Panc1 (cell line): ENCODE measurements at regions of chr2 and their contacts with region 1.

Region 1: DNA sequence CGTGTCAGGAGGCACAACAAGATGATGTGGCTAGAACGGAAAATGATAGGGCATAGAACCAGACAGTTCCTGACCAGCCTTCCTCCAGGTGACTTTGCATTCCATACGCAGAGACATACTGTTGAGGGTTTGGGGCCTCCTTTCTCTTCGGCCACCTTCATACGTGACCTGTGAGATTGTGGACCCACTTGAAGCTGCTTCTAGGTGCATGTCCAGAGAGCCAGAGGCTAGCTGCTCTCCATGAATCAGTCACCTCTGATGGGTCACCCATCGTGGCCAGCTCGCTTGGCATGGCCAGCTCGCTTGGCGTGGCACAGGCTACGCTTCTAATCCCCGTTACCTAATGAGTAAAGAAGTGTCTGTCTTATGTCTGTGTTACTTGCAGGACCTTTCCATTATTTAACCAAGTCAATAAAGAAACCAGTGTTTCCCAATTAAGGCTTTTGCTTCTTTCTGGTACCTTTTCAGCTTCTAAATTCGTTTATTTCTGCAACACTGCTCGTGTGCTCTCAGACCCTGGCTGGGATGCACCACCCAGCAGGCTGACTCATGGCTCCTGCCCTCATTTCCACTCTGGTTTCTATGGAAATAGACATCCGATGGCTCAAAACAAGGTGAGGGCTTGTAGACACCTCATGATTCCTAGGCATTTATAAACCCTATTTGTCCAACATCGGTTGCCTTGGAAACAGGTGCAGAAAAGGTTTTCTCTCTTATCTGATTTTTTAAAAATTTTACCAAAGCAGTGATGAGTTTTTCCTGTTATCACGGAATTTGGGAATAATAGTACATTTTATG is 86.7 kb upstream of the B3GNT7 start:
- DNase-seq: no peak
- ATAC-seq: 0 out of 2 replicates have a peak, but pooled peaks have one; percentile 24
- H3K4me3 ChIP-seq: no peak overlapping the region
- H3K27ac ChIP-seq: no peak overlapping the region
- H3K4me1 ChIP-seq: peaks cover 4% of the 10 kb centered on the region
- H3K27me3 ChIP-seq: no peaks in the 10 kb centered on the region
- CTCF ChIP-seq: no peak

Region 2: DNA sequence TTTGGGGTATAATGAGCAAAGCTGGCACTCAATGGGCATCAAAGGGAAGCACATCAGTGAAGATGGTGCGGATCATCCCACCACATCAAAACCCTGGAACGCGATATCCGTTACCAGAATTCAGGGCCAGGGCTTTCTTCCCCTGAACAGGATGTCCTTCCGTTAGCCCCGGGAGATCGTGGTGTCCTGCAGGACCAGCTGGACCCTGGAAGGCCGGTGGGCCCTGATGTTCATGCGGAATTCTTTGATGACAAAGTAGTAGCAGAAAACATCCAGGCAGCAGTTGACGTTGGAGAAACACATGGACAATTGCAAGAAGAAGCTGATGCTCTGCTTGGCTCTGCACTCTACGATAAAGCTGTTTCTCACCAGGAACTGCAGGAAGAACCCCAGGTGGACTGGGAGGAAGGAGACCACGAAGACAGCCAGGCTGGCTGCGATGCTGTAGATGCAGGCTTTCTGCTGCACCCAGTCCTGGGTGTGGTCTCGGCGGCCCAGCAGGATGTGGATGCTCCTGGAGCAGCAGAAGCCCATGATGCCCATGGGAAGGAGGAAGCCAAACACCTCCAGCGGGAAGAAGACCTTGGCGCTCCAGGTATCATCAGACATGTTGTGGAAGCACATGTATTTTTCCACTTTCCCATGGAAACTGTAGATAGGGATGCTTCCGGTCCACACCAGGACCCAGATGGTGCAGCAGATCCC is 398.8 kb before region 1 on chr2:
- CTCF ChIA-PET with region 1: no interaction called
- POLR2A ChIA-PET with region 1: interaction called, 14 read pairs
- in situ Hi-C with region 1: no loop called
- intact Hi-C with region 1: no loop called
- DNase-seq: no peak
- ATAC-seq: no peak
- H3K4me3 ChIP-seq: no peak overlapping the region
- H3K27ac ChIP-seq: no peak overlapping the region
- H3K4me1 ChIP-seq: no peaks in the 10 kb centered on the region
- H3K27me3 ChIP-seq: no peaks in the 10 kb centered on the region
- CTCF ChIP-seq: no peak

Region 3: DNA sequence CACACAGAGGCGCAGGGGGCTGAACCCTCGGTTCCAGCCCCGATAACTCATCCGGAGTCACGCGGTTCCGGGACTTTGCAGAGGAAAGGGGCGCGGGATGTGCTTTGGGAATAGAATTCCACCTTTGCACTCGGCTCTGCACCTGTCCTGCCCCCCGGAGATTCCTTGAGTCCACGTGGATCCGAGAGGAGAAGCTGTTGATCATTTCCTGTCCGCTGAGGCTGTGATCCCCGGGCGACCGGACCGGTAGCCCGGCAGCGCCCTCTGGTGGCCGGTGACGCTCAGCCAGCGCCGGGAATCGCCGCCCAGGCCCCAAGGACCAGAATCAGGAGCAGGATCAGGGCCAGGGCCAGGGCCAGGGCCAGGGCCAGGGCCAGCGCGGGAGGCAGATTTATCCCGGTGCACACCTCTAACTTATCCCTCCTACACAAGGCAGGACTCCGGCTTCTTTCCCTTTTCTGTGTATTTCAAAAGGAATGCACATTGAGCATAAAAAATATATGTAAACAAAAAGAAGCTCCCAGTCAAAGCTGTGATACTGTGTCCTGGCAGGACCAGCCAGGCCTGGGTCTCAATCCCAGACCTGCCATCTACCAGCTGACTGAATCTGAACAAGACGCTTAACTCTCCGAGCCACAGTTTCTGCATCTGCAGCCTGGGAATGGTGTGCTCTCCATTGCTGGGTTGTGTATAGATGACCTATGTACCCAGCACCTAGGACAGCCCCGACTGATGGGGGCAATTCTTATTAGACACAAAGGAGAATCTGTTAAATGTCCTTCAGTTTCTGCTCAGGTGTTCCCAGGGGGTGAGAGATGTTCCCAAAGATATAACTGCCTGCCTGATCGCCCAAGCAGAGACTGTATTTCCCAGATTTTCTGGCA is 321.5 kb before region 1 on chr2:
- CTCF ChIA-PET with region 1: no interaction called
- POLR2A ChIA-PET with region 1: no interaction called
- in situ Hi-C with region 1: no loop called
- intact Hi-C with region 1: no loop called
- DNase-seq: peak; percentile 20
- ATAC-seq: peak; percentile 94
- H3K4me3 ChIP-seq: peak overlapping the region; percentile 41 to 61
- H3K27ac ChIP-seq: peak overlapping the region; percentile 66
- H3K4me1 ChIP-seq: peaks cover 4% of the 10 kb centered on the region
- H3K27me3 ChIP-seq: no peaks in the 10 kb centered on the region
- CTCF ChIP-seq: peak; percentile 96

Region 4: GRCh38 chr2:231227309-231228162 is 81.3 kb before region 1 on chr2:
- CTCF ChIA-PET with region 1: no interaction called
- POLR2A ChIA-PET with region 1: no interaction called
- in situ Hi-C with region 1: no loop called
- intact Hi-C with region 1: no loop called
- DNase-seq: peak; percentile 46
- ATAC-seq: peak; percentile 98
- H3K4me3 ChIP-seq: no peak overlapping the region
- H3K27ac ChIP-seq: peak overlapping the region; percentile 20; the same call in 1 of the 2 replicates
- H3K4me1 ChIP-seq: 0 out of 2 replicates have a peak, but pooled peaks cover 4% of the 10 kb centered on the region
- H3K27me3 ChIP-seq: no peaks in the 10 kb centered on the region
- CTCF ChIP-seq: peak; percentile 88

Region 5: DNA sequence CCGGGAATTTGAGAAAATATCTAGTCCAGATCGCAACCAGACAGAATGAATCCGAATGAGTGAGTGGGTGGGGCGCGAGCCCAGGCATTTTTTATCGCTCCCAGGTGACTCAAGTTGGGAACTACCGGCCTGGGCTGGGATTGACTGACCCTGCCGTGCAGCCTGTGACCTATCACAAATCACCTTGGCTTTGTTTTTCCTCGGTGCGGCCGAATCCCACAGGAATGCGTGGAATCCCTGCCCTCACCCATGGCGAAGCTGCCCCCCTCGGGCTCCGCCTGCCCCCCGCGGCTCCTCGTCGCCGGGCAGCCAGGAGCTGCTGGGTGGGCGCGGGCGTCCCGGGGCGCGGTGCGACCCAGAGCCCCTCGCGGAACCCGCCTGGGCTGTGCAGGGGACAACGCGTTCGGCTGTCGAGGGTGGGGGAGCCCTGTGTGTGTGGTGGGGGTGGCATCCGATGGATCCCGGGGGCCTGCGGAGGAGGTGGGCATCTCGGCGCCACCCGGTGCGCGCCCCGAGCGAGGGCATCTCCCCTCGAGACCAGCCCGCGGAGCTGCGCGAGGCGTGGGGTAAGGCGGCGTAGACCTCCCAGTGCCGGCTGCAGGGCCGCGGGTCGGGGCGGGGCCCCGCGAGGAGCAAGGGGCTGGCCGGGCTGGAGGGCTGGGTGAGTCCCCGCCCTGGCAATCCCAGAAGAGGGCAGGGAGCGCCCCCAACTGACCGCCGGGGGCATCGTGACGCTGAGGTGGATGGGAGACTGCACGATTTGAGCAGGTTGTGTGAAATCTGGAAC is 103.2 kb after region 1 on chr2:
- CTCF ChIA-PET with region 1: interaction called, 3 read pairs
- POLR2A ChIA-PET with region 1: no interaction called
- in situ Hi-C with region 1: loop called (anchors 25 kb)
- intact Hi-C with region 1: no loop called
- DNase-seq: peak; percentile 57
- ATAC-seq: peak; percentile 98
- H3K4me3 ChIP-seq: peak overlapping the region; percentile 65 to 79
- H3K27ac ChIP-seq: peak overlapping the region; percentile 78
- H3K4me1 ChIP-seq: peaks cover 27% of the 10 kb centered on the region
- H3K27me3 ChIP-seq: no peaks in the 10 kb centered on the region
- CTCF ChIP-seq: peak; percentile 98